ENCODE measurements at regions of chr5 and their contacts with region 1.

Region 1: DNA sequence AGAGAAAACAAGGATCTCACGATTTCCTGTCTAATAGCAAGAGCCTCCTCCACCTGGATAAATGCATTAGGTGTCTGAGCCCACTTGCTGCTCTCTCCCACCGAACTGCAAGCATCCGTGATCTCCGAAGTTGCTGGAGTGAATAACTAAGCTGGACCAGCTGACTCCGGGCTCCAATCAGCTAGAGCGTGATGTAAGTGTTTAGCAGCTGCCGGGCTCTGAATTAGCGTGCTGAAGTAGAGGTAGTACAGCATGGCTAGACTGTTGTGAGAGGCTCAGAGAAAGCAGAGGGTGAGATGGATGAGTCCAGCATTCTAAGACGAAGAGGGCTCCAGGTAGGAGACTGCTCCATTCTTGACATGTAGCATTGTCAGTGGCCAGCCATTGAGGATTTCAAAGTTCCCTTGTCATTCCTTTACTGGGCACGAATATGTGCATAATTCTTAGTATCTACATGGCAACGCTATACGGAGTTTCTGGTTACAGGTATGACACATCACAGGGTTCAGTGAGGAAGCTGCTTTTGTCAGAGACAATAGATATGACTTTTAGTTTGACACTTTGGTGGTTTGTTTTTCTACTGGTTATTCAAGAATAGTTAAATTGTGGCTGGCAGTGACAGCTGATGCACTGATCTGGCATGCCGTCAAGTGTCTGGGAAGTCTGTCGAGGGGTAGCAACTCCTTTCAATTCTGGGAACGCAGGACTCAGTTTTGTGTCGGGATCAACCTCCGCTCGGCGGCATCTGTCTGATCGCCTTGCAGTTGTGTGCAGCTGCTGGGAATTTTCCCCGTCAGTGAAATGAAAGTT is 232.6 kb downstream of the MAST4 start:
- DNase-seq: peak; percentile 78
- H3K4me3 Mint-ChIP-seq: peak overlapping the region; percentile 85
- H3K27ac Mint-ChIP-seq: peak overlapping the region; percentile 87
- H3K4me1 Mint-ChIP-seq: peaks cover 29% of the 10 kb centered on the region
- H3K27me3 Mint-ChIP-seq: peaks cover 15% of the 10 kb centered on the region

Region 2: GRCh38 chr5:66802941-66803340 is 25.8 kb before region 1 on chr5:
- CTCF ChIA-PET with region 1: no interaction called
- POLR2A ChIA-PET with region 1: no interaction called
- intact Hi-C with region 1: no loop called
- DNase-seq: no peak
- H3K4me3 Mint-ChIP-seq: no peak overlapping the region
- H3K27ac Mint-ChIP-seq: no peak overlapping the region
- H3K4me1 Mint-ChIP-seq: no peaks in the 10 kb centered on the region
- H3K27me3 Mint-ChIP-seq: peaks cover 32% of the 10 kb centered on the region

Region 3: DNA sequence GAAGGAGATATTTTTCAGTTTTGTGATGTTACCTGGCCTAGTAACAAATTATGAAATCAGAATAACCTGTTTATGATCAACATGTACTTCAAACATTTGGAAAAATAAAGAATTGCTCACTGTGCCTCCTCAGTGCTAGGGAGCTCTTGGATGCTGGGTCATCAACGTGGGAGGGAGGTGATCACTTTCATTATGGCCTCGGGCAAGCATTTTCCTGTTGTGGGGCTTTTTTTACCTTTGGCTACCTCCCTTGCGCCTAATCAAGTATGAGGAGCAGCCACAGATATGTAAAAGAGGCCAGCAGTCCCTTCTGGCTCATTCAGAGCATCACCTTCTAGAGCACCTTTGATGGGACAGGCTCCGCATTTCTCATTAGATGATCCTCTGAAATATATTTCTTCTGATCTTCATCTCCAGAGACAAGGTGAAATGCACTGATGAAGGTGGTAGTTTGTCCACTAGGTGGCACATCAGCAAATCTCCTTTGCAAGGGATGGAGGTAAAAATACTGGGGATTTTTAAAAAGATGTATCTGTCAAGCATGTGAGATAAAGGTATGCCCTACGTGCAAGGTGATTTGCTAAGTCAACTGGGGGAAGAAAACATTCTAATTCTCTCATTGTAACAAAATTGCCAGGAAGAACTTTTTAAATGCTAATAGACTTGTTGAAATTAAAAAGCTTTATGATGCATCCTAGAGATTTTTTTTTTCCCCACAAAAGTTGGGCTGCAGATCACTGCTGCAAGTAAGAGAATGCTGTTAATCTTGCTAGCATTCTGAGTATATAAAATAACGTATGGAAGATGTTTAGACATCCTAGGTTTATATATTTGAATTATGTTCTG is 14.4 kb before region 1 on chr5:
- CTCF ChIA-PET with region 1: interaction called, 40 read pairs
- POLR2A ChIA-PET with region 1: interaction called, 4 read pairs
- intact Hi-C with region 1: no loop called
- DNase-seq: peak; percentile 56
- H3K4me3 Mint-ChIP-seq: no peak overlapping the region
- H3K27ac Mint-ChIP-seq: no peak overlapping the region
- H3K4me1 Mint-ChIP-seq: peaks cover 2% of the 10 kb centered on the region
- H3K27me3 Mint-ChIP-seq: peaks cover 8% of the 10 kb centered on the region

Region 4: DNA sequence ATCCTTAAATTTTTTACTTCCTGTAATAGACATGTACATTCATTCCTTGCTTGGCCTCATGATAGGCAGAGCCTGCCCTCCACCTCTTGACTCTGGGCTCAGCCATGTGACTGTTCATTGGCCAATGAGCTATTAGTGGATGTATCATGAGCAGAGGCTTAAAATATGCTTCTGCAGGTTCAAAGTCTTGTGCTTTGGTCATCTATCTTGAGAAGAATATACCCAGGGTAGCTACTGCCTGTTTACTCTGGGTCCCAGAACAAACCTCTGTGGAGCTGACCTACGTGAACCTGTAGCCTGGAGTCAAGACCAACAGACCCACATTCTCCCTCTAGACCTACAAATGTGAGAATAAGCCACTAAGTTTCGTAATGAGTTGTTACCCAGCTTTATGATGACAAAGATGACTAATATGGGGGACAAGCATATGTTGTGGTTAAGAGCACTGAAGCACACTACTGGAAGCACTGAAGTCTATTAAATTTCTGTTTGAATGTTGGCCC is 11.8 kb after region 1 on chr5:
- CTCF ChIA-PET with region 1: interaction called, 41 read pairs
- POLR2A ChIA-PET with region 1: interaction called, 24 read pairs
- intact Hi-C with region 1: loop called (anchors 1 kb)
- DNase-seq: peak; percentile 60
- H3K4me3 Mint-ChIP-seq: no peak overlapping the region
- H3K27ac Mint-ChIP-seq: peak overlapping the region; percentile 88
- H3K4me1 Mint-ChIP-seq: peaks cover 52% of the 10 kb centered on the region
- H3K27me3 Mint-ChIP-seq: peaks cover 25% of the 10 kb centered on the region

Region 5: DNA sequence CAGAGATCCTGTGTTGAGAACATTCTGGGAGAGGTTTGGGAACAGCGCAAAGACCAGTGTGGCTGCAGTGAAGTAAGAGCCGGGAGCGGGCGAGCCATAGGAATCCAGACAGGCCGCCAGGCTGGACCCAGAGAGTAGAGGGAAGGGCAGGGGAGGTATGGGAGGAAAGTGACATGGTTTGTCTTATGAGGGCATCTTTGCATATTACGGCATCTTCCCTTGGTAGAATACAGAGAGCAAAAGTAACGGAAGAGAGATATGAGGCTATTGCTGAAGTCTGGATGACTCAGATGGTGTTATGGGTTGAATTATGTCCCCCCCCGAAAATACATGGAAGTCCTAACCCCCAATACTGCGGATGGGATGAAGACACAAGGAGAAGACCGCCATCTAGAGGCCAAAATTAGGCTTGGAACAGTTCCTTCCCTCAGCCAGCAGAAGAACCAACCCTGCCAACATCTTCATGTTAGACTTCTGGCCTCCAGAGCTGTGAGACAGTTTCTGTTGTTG is 35.6 kb after region 1 on chr5:
- CTCF ChIA-PET with region 1: interaction called, 9 read pairs
- POLR2A ChIA-PET with region 1: no interaction called
- intact Hi-C with region 1: loop called (anchors 5 kb)
- DNase-seq: peak; percentile 37
- H3K4me3 Mint-ChIP-seq: no peak overlapping the region
- H3K27ac Mint-ChIP-seq: no peak overlapping the region
- H3K4me1 Mint-ChIP-seq: peaks cover 8% of the 10 kb centered on the region
- H3K27me3 Mint-ChIP-seq: peaks cover 10% of the 10 kb centered on the region

Region 6: GRCh38 chr5:67012171-67012570 is 183.4 kb after region 1 on chr5:
- CTCF ChIA-PET with region 1: no interaction called
- POLR2A ChIA-PET with region 1: no interaction called
- intact Hi-C with region 1: loop called (anchors 2 kb)
- DNase-seq: peak; percentile 58
- H3K4me3 Mint-ChIP-seq: no peak overlapping the region
- H3K27ac Mint-ChIP-seq: peak overlapping the region; percentile 72
- H3K4me1 Mint-ChIP-seq: peaks cover 94% of the 10 kb centered on the region
- H3K27me3 Mint-ChIP-seq: no peaks in the 10 kb centered on the region

Region 7: DNA sequence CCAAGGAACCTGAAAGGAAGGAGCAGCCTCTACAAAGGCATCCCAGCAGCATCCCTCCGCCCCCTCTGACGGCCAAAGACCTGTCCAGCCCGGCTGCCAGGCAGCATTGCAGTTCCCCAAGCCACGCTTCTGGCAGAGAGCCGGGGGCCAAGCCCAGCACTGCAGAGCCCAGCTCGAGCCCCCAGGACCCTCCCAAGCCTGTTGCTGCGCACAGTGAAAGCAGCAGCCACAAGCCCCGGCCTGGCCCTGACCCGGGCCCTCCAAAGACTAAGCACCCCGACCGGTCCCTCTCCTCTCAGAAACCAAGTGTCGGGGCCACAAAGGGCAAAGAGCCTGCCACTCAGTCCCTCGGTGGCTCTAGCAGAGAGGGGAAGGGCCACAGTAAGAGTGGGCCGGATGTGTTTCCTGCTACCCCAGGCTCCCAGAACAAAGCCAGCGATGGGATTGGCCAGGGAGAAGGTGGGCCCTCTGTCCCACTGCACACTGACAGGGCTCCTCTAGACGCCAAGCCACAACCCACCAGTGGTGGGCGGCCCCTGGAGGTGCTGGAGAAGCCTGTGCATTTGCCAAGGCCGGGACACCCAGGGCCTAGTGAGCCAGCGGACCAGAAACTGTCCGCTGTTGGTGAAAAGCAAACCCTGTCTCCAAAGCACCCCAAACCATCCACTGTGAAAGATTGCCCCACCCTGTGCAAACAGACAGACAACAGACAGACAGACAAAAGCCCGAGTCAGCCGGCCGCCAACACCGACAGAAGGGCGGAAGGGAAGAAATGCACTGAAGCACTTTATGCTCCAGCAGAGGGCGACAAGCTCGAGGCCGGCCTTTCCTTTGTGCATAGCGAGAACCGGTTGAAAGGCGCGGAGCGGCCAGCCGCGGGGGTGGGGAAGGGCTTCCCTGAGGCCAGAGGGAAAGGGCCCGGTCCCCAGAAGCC is 337.0 kb after region 1 on chr5:
- CTCF ChIA-PET with region 1: no interaction called
- POLR2A ChIA-PET with region 1: no interaction called
- intact Hi-C with region 1: loop called (anchors 5 kb)
- DNase-seq: peak; percentile 89
- H3K4me3 Mint-ChIP-seq: peak overlapping the region; percentile 91
- H3K27ac Mint-ChIP-seq: peak overlapping the region; percentile 98
- H3K4me1 Mint-ChIP-seq: peaks cover 70% of the 10 kb centered on the region
- H3K27me3 Mint-ChIP-seq: no peaks in the 10 kb centered on the region